PC-3 (cell line): ENCODE measurements at regions of chr1 and their contacts with region 1.

Region 1: DNA sequence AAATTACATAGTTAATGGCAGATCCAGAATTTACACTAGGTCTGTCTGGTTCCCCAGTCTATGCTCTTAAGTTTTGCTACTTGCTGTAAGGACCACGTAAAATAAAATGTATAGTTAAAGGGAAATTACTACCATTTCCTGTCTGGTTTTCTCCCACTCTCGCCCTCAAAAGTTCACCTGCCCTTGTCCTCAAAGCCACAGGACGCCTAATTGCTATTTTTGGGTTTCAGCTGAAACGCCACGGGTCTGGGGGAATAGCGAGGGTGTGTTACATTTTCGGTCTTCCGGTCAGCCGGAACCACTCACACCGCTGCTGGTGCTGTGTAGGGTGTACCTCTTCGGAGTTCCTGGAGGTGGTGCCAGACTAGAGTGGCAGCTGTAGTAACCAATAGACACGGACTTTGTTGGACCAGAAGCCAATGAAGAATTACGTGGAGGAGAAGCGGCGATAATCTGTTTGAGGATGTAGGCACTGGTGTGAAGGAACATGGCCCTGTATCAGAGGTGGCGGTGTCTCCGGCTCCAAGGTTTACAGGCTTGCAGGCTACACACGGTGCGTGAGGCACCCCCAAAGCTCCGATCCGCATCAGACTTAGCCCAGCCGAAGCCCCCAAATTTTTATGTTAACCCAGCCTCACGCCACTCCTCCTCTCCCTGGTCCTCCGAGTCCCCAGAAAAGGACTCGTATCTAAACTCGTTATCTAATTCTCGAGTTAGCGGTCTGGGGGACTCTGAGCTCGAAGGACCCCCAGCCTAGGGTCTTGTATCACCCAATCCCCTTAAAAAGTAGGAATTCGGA is at the start of gene TARS2:
- DNase-seq: peak; percentile 100
- ATAC-seq: peak; percentile 99
- H3K4me3 ChIP-seq: peak within 1 kb of the TSS; percentile 84
- H3K27ac ChIP-seq: no peak within 1 kb of the TSS
- H3K4me1 ChIP-seq: peaks cover 7% of the 10 kb centered on the region
- H3K27me3 ChIP-seq: no peaks in the 10 kb centered on the region
- CTCF ChIP-seq: no peak
- total RNA-seq, gene TARS2: 56.2 and 61.6 TPM in 2 replicates

Region 2: DNA sequence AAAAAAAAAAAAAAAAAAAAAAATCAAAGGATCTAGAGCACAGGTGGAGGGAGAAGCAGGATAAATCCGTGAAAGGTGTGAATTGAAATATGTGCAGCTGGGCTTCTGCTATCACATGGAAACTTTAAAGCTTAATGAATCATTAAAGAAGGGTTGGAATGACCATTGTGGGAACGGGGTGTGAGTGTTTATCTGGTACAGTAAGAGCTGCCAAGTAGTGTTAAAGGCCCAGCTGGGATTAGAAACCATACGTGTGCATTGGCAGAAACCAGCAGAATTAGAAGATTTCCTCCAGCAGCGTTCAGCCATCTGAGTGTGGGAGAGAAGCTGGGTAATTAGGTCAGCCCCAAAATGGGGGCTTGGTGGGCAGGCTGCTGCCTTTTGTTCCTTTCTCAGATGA is 41.9 kb after region 1 on chr1:
- CTCF ChIA-PET with region 1: no interaction called
- POLR2A ChIA-PET with region 1: no interaction called
- intact Hi-C with region 1: loop called (anchors 5 kb)
- DNase-seq: no peak
- ATAC-seq: peak; percentile 57
- H3K4me3 ChIP-seq: no peak overlapping the region
- H3K27ac ChIP-seq: no peak overlapping the region
- H3K4me1 ChIP-seq: peaks cover 13% of the 10 kb centered on the region; the same call in 1 of the 2 replicates
- H3K27me3 ChIP-seq: no peaks in the 10 kb centered on the region
- CTCF ChIP-seq: no peak